ENCODE measurements at regions of chr4 and their contacts with region 1.

Region 1: GRCh38 chr4:80989921-80990544 is 40.5 kb upstream of the BMP3 start:
- DNase-seq: peak; percentile 36 to 56 (median 48)
- H3K4me3 ChIP-seq: no peak overlapping the region
- H3K4me3 Mint-ChIP-seq: no peak overlapping the region
- H3K27ac ChIP-seq: no peak overlapping the region
- H3K27ac Mint-ChIP-seq: no peak overlapping the region
- H3K4me1 ChIP-seq: no peaks in the 10 kb centered on the region
- H3K4me1 Mint-ChIP-seq: peaks cover 0 to 4% (median 0%) of the 10 kb centered on the region in 4 donors
- H3K27me3 ChIP-seq: no peaks in the 10 kb centered on the region
- H3K27me3 Mint-ChIP-seq: peaks cover 2 to 11% of the 10 kb centered on the region in 2 donors

Region 2: DNA sequence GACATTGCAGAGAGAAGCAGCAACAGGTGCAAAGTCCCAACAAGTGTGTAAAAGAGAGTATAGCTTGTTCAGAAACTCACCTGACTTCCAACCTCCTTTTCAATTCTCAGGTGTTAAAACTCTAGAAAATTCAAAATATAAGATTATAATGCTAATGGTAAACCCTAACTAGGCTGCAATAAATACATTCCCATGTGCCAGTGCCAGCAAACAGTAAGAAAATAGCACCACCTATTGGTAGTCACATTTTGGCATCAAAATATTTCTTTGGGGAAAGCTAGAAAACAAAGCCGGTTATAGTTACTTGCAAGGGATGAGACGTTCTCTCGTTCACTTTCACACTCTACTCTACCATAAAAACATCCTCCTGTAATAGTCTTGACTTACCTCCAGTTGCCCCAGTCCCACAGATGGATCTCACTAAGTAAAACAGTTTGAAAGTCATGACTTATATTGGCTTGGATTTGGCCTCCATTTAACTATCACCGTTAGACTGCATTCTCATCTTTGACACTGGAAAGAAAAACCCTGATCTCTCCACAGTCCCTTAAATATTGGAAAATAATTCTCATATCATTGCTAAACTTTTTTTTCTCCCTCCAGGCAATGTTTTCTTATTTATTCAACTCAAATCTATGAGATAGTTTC is 50.1 kb after region 1 on chr4:
- CTCF ChIA-PET with region 1: interaction called, 23 read pairs
- POLR2A ChIA-PET with region 1: no interaction called
- intact Hi-C with region 1: loop called (anchors 1 kb)
- DNase-seq: peak in 4 of 5 donors; percentile 37 to 46 (median 43)
- H3K4me3 ChIP-seq: no peak overlapping the region
- H3K4me3 Mint-ChIP-seq: no peak overlapping the region
- H3K27ac ChIP-seq: no peak overlapping the region
- H3K27ac Mint-ChIP-seq: no peak overlapping the region
- H3K4me1 ChIP-seq: no peaks in the 10 kb centered on the region
- H3K4me1 Mint-ChIP-seq: no peaks in the 10 kb centered on the region
- H3K27me3 ChIP-seq: no peaks in the 10 kb centered on the region
- H3K27me3 Mint-ChIP-seq: peaks cover 13 to 14% of the 10 kb centered on the region in 2 donors

Measured in CD4-positive, alpha-beta memory T cell (primary cell).